Ovary (tissue), 10 donors: ENCODE measurements at regions of chr6 and their contacts with region 1.

Region 1: DNA sequence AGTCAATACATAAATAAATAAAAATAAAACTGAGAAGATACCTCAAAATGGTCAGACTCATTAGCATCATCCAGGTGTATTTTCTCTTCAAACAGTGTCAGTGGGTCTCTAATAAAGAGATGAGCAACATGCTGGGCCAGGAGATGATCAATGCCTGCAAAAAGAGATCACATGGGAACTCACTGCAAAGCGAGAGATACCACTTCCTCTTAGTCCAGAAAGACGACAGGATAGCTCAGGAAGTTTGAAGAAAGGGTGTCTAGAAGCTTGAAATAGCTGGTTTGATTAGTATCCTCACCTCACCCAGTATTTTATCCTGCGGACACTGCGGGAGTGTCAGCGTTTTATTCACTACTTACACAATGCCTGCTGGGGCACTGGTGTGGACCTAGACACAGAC is 38.0 kb downstream of the GCLC start:
- DNase-seq: no peak
- H3K4me3 ChIP-seq: no peak overlapping the region
- H3K27ac ChIP-seq: no peak overlapping the region
- H3K4me1 ChIP-seq: no peaks in the 10 kb centered on the region
- H3K27me3 ChIP-seq: no peaks in the 10 kb centered on the region
- CTCF ChIP-seq: no peak
- EP300 ChIP-seq: no peak
- POLR2A ChIP-seq: no peak

Region 2: GRCh38 chr6:53410508-53411258 is 96.2 kb before region 1 on chr6:
- intact Hi-C with region 1: no loop called
- DNase-seq: peak in 4 of 5 donors; percentile 13 to 45 (median 19)
- H3K4me3 ChIP-seq: no peak overlapping the region
- H3K27ac ChIP-seq: no peak overlapping the region
- H3K4me1 ChIP-seq: no peaks in the 10 kb centered on the region
- H3K27me3 ChIP-seq: no peaks in the 10 kb centered on the region
- CTCF ChIP-seq: peak in 1 of 3 donors; percentile 19
- EP300 ChIP-seq: no peak
- POLR2A ChIP-seq: no peak

Region 3: GRCh38 chr6:53441035-53441493 is 65.8 kb before region 1 on chr6:
- intact Hi-C with region 1: no loop called
- DNase-seq: no peak
- H3K4me3 ChIP-seq: no peak overlapping the region
- H3K27ac ChIP-seq: no peak overlapping the region
- H3K4me1 ChIP-seq: no peaks in the 10 kb centered on the region
- H3K27me3 ChIP-seq: no peaks in the 10 kb centered on the region
- CTCF ChIP-seq: no peak
- EP300 ChIP-seq: no peak
- POLR2A ChIP-seq: no peak

Region 4: DNA sequence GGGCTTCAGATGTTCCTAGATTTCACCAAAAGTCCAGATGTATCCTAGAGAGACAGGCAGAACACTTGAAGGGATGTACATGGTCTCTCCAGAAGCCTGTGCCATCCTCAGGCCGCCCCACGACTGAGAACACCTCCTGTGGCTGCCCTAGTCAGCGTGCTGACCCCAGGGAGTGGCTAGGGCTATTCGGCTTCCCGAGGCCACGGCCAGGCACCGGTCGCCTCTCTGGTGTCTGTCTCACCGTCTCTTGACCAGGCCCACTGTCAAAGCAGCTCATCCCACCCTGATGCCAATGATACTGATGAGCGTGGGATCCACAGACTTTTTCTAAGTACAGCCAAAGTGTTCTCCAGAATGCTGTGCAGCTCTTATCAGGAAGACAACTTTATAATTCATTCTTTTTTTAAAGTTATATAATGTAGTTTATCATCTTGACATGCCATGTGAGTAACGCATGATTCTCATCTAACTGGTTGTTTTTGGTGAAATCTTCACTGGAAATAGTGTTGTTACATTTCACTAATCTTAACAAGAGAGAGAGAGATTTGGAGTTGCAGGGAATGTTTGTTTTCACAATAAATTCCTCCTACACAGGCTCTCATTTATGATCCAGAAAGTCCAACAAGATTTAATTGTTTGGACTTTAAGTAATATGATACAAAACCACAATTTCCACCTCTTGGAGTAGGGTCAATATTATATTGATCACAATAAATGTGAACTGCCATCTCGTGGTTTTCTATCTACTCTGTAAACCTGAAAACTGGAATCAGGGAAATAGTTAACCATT is 200.4 kb after region 1 on chr6:
- intact Hi-C with region 1: loop called in 1 of 4 experiments (anchors 5 kb)
- DNase-seq: no peak
- H3K4me3 ChIP-seq: no peak overlapping the region
- H3K27ac ChIP-seq: no peak overlapping the region
- H3K4me1 ChIP-seq: peaks cover 9% of the 10 kb centered on the region
- H3K27me3 ChIP-seq: no peaks in the 10 kb centered on the region
- CTCF ChIP-seq: no peak
- EP300 ChIP-seq: no peak
- POLR2A ChIP-seq: no peak